GM12878 (cell line): ENCODE measurements at regions of chr6 and their contacts with region 1.

Region 1: GRCh38 chr6:46116289-46116688 is 13.5 kb upstream of the ENPP4 start:
- DNase-seq: no peak
- ATAC-seq: peak; percentile 41; the same call in 2 of the 3 replicates
- H3K4me3 ChIP-seq: no peak overlapping the region
- H3K27ac ChIP-seq: no peak overlapping the region
- H3K4me1 ChIP-seq: no peaks in the 10 kb centered on the region
- H3K27me3 ChIP-seq: no peaks in the 10 kb centered on the region
- CTCF ChIP-seq: no peak
- EP300 ChIP-seq: no peak
- POLR2A ChIP-seq: no peak
- RAD21 ChIP-seq: no peak

Region 2: GRCh38 chr6:45344900-45345299 is 771.4 kb before region 1 on chr6:
- CTCF ChIA-PET with region 1: no interaction called
- POLR2A ChIA-PET with region 1: no interaction called
- RAD21 ChIA-PET with region 1: no interaction called
- SMC1A ChIA-PET with region 1: no interaction called
- in situ Hi-C with region 1: no loop called
- intact Hi-C with region 1: no loop called
- DNase-seq: no peak
- ATAC-seq: no peak
- H3K4me3 ChIP-seq: no peak overlapping the region
- H3K27ac ChIP-seq: no peak overlapping the region
- H3K4me1 ChIP-seq: no peaks in the 10 kb centered on the region
- H3K27me3 ChIP-seq: no peaks in the 10 kb centered on the region
- CTCF ChIP-seq: no peak
- EP300 ChIP-seq: no peak
- POLR2A ChIP-seq: no peak
- RAD21 ChIP-seq: no peak

Region 3: DNA sequence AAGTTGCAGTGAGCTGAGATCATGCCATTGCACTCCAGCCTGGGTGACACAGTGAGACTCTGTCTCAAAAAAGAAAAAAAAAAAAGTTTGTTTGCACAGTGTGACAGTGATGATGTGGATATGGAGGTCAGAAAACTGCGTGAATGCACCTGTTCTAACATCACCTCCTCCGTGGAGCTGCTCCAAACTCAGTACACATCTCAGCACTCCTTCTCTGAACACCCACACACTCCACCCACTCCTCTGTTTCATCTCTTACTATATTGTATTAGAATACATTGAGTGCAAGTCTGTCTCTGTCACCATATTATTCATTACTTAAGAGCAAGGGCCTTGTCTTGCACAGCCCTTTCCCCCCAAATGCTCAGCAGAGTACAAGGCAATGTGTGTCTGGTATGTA is 38.0 kb before region 1 on chr6:
- CTCF ChIA-PET with region 1: no interaction called
- POLR2A ChIA-PET with region 1: no interaction called
- RAD21 ChIA-PET with region 1: no interaction called
- SMC1A ChIA-PET with region 1: no interaction called
- in situ Hi-C with region 1: no loop called
- intact Hi-C with region 1: no loop called
- DNase-seq: no peak
- ATAC-seq: no peak
- H3K4me3 ChIP-seq: no peak overlapping the region
- H3K27ac ChIP-seq: no peak overlapping the region
- H3K4me1 ChIP-seq: no peaks in the 10 kb centered on the region
- H3K27me3 ChIP-seq: no peaks in the 10 kb centered on the region
- CTCF ChIP-seq: no peak
- EP300 ChIP-seq: no peak
- POLR2A ChIP-seq: no peak
- RAD21 ChIP-seq: no peak

Region 4: GRCh38 chr6:46129629-46130511 is 13.6 kb after region 1 on chr6 and contains the start of gene ENPP4:
- CTCF ChIA-PET with region 1: no interaction called
- POLR2A ChIA-PET with region 1: interaction called, 3 read pairs
- RAD21 ChIA-PET with region 1: interaction called, 3 read pairs
- SMC1A ChIA-PET with region 1: interaction called, 10 read pairs
- in situ Hi-C with region 1: no loop called
- intact Hi-C with region 1: no loop called
- DNase-seq: peak; percentile 100
- ATAC-seq: peak; percentile 99
- H3K4me3 ChIP-seq: peak within 1 kb of the TSS; percentile 95
- H3K27ac ChIP-seq: peak within 1 kb of the TSS; percentile 68
- H3K4me1 ChIP-seq: peaks cover 12% of the 10 kb centered on the region
- H3K27me3 ChIP-seq: no peaks in the 10 kb centered on the region
- CTCF ChIP-seq: 0 out of 6 replicates have a peak, but pooled peaks of 1 of the 3 experiments have one; percentile 6
- EP300 ChIP-seq: no peak
- POLR2A ChIP-seq: peak; percentile 80
- RAD21 ChIP-seq: no peak
- polyA plus RNA-seq, gene ENPP4: 3.3 to 5.2 TPM